Breast epithelium (tissue), 4 donors: ENCODE measurements at regions of chr7 and their contacts with region 1.

Region 1: GRCh38 chr7:100691676-100692577 is 2.1 kb downstream of the GIGYF1 start:
- DNase-seq: peak; percentile 68 to 77
- H3K4me3 ChIP-seq: peak overlapping the region; percentile 95 to 100 (median 95)
- H3K27ac ChIP-seq: peak overlapping the region; percentile 21 to 93
- H3K4me1 ChIP-seq: peaks cover 4 to 14% of the 10 kb centered on the region in 2 donors
- H3K27me3 ChIP-seq: no peaks in the 10 kb centered on the region
- CTCF ChIP-seq: peak; percentile 72 to 93 (median 83)
- POLR2A ChIP-seq: no peak

Region 2: DNA sequence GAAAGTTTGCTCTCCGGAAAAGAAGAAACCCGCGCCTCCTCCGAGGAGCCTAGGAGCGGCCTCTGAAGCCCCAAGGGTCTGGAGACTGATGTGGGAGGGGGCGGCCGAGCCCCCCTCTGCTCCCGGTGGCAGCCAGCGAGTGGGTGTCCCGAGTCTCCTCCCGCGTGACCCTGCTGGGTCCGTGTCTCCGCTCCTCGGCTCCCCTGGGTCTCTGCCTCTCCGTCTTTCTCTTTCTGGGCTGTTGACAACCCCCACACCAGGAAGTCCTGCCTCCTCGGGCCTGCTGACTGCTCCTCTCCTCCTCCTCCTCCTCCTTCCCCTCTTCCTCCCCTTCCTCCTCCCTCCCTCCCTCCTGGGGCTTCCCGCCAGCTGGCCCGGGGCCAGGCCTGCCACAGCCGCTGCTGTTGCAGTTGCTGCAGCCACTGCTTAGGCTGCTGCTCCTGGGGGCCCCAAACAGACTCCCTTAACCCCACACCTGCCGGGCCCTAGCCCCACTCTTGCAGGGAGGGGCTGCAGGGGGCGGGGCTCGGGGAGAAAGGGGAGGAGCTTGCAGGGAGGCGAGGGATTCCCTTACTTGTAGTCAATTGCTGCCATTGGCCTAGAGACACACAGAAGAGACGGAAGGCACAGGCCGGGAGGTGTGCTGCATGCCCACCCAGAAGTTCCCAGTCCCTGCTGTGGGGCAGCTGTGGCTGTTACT is 212.8 kb before region 1 on chr7 and contains the start of gene TSC22D4:
- intact Hi-C with region 1: loop called (anchors 5 kb)
- DNase-seq: peak; percentile 94 to 97
- H3K4me3 ChIP-seq: peak within 1 kb of the TSS; percentile 94 to 96 (median 95)
- H3K27ac ChIP-seq: peak within 1 kb of the TSS; percentile 94 to 95
- H3K4me1 ChIP-seq: peaks cover 12% of the 10 kb centered on the region in 2 donors
- H3K27me3 ChIP-seq: no peaks in the 10 kb centered on the region
- CTCF ChIP-seq: no peak
- POLR2A ChIP-seq: peak; percentile 83
- total RNA-seq, gene TSC22D4: 17.0 to 23.7 (median 19.7) TPM

Region 3: GRCh38 chr7:100662377-100662776 is 29.6 kb before region 1 on chr7:
- intact Hi-C with region 1: loop called (anchors 1 kb)
- DNase-seq: no peak
- H3K4me3 ChIP-seq: no peak overlapping the region
- H3K27ac ChIP-seq: no peak overlapping the region
- H3K4me1 ChIP-seq: no peaks in the 10 kb centered on the region
- H3K27me3 ChIP-seq: peaks cover 0 to 14% of the 10 kb centered on the region in 2 donors
- CTCF ChIP-seq: no peak
- POLR2A ChIP-seq: no peak

Region 4: GRCh38 chr7:100719523-100720319 is 27.8 kb after region 1 on chr7:
- intact Hi-C with region 1: no loop called
- DNase-seq: no peak
- H3K4me3 ChIP-seq: peak overlapping the region in 1 of 3 donors; percentile 20
- H3K27ac ChIP-seq: no peak overlapping the region
- H3K4me1 ChIP-seq: peaks cover 0 to 7% of the 10 kb centered on the region in 2 donors
- H3K27me3 ChIP-seq: peaks cover 6 to 27% of the 10 kb centered on the region in 2 donors
- CTCF ChIP-seq: no peak
- POLR2A ChIP-seq: no peak

Region 5: DNA sequence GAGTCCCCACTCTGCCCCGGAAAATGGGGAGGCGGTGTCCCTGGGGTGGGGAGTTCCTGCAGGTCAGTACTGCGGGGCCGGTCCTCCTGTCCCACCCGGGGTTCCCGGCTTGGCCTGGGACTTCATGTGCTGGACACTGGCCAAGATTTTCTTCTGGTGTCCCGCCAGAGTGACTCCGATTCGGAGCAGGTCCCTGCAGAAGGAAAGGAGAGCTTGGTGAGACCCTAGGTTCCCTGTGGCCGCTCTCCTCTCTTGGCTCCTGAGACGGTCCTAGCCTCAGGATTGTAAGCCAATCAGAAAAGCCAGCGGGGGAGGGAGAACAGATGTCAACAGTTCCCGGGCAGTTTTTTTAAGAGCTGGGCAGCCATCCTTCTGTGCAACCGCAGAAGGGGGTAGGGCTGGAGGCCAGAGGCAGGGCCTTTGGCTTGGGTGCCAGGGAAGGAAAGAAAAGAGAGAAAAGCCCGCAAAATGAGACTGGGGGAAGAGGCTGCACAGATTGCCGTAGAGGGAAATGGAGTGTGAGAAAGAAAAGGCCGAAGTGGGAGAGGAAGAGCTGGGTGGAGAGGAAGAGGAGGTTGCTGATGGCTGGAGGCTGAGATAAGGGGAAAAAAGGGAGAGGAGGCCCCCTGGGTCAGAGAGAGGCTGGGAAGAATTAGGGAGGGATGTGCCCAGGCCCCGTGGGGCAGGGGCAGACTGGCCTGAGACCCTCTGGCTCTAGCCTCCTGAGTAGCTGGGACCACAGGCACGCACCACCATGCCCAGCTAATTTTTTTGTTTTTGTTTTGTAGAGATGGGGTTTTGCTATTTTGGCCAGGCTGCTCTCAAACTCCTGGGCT is 111.7 kb after region 1 on chr7:
- intact Hi-C with region 1: no loop called
- DNase-seq: peak; percentile 79 to 86
- H3K4me3 ChIP-seq: peak overlapping the region in 1 of 3 donors; percentile 29
- H3K27ac ChIP-seq: peak overlapping the region; percentile 80 to 86
- H3K4me1 ChIP-seq: peaks cover 0 to 20% of the 10 kb centered on the region in 2 donors
- H3K27me3 ChIP-seq: no peaks in the 10 kb centered on the region
- CTCF ChIP-seq: no peak
- POLR2A ChIP-seq: no peak